Activated CD4-positive, alpha-beta T cell treated with anti-CD3 and anti-CD28 coated beads for 36 hours (primary cell): ENCODE measurements at regions of chr5 and their contacts with region 1.

Region 1: GRCh38 chr5:181207214-181208107 is 2.5 kb upstream of the TRIM7 start:
- DNase-seq: peak; percentile 93
- ATAC-seq: peak; percentile 51
- H3K4me3 Mint-ChIP-seq: peak overlapping the region; percentile 87
- H3K27ac Mint-ChIP-seq: peak overlapping the region; percentile 93
- H3K4me1 Mint-ChIP-seq: peaks cover 32% of the 10 kb centered on the region
- H3K27me3 Mint-ChIP-seq: peaks cover 20% of the 10 kb centered on the region

Region 2: GRCh38 chr5:181173420-181174342 is 33.8 kb before region 1 on chr5:
- CTCF ChIA-PET with region 1: interaction called, 5 read pairs
- POLR2A ChIA-PET with region 1: interaction called, 7 read pairs
- intact Hi-C with region 1: loop called in 1 of 2 experiments (anchors 1 kb)
- DNase-seq: peak; percentile 86
- ATAC-seq: peak; percentile 80
- H3K4me3 Mint-ChIP-seq: peak overlapping the region; percentile 77
- H3K27ac Mint-ChIP-seq: peak overlapping the region; percentile 94
- H3K4me1 Mint-ChIP-seq: peaks cover 47% of the 10 kb centered on the region
- H3K27me3 Mint-ChIP-seq: peaks cover 19% of the 10 kb centered on the region

Region 3: GRCh38 chr5:181181650-181182565 is 25.6 kb before region 1 on chr5:
- CTCF ChIA-PET with region 1: interaction called, 26 read pairs
- POLR2A ChIA-PET with region 1: interaction called, 4 read pairs
- intact Hi-C with region 1: no loop called
- DNase-seq: peak; percentile 78
- ATAC-seq: peak; percentile 63
- H3K4me3 Mint-ChIP-seq: no peak overlapping the region
- H3K27ac Mint-ChIP-seq: no peak overlapping the region
- H3K4me1 Mint-ChIP-seq: peaks cover 25% of the 10 kb centered on the region
- H3K27me3 Mint-ChIP-seq: no peaks in the 10 kb centered on the region

Region 4: GRCh38 chr5:181243512-181244343 is 36.3 kb after region 1 on chr5 and contains the start of gene RACK1:
- CTCF ChIA-PET with region 1: interaction called, 3 read pairs
- POLR2A ChIA-PET with region 1: interaction called, 4 read pairs
- intact Hi-C with region 1: loop called in 1 of 2 experiments (anchors 5 kb)
- DNase-seq: peak; percentile 94
- ATAC-seq: peak; percentile 70
- H3K4me3 Mint-ChIP-seq: peak within 1 kb of the TSS; percentile 91
- H3K27ac Mint-ChIP-seq: peak within 1 kb of the TSS; percentile 99
- H3K4me1 Mint-ChIP-seq: peaks cover 50% of the 10 kb centered on the region
- H3K27me3 Mint-ChIP-seq: no peaks in the 10 kb centered on the region
- total RNA-seq, gene RACK1: 2,724 to 3,901 TPM

Region 5: DNA sequence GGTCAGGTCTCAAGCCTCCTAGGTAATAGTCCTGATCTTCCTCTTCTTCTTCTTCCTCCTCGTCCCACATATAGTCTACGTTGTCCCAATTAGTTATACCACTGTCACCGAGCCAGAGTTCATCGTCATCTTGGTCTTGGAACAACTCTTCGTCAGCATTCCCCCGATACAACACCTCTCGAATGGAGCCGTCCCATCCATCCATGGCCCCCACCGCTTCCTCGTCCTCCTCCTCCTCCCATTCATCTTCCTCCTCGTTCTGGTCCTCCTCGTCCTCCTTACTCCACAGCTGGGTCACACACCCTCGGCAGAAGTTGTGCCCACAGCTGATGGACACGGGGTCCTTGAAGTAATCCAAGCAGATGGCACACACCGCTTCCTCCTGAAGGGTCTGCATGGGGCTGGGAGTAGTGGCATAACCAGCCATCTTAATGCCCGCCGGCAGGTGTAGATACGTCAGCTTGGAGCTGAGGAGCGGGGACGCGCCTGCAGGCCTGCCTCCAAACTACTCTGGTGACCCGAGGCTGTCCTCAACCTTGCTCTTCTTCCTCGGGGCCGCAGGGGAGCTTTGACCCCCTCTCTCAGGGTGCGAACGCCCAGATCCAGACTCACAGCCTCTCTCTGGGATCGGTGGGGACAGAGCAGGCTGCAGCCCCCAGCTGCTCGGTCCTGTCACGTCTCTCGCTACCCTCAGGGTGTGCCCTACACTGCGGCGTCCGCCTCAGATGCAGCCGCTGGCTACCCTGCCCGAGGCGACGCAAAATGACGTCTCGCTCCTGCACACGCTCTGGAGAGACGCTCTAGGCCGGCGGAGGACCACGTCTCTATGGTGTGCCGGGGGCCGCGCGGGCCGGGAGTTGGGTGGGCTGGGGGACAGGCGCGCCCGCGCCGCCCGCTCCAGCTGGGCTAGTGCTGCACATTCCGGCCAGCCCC is 53.2 kb after region 1 on chr5 and contains the start of gene TRIM52:
- CTCF ChIA-PET with region 1: no interaction called
- POLR2A ChIA-PET with region 1: interaction called, 13 read pairs
- intact Hi-C with region 1: loop called in 1 of 2 experiments (anchors 1 kb)
- DNase-seq: peak; percentile 95
- ATAC-seq: peak; percentile 85
- H3K4me3 Mint-ChIP-seq: peak within 1 kb of the TSS; percentile 91
- H3K27ac Mint-ChIP-seq: peak within 1 kb of the TSS; percentile 95
- H3K4me1 Mint-ChIP-seq: peaks cover 38% of the 10 kb centered on the region
- H3K27me3 Mint-ChIP-seq: no peaks in the 10 kb centered on the region
- total RNA-seq, gene TRIM52: 10.4 to 13.1 TPM